Calu3 (cell line): ENCODE measurements at regions of chr14 and their contacts with region 1.

Region 1: DNA sequence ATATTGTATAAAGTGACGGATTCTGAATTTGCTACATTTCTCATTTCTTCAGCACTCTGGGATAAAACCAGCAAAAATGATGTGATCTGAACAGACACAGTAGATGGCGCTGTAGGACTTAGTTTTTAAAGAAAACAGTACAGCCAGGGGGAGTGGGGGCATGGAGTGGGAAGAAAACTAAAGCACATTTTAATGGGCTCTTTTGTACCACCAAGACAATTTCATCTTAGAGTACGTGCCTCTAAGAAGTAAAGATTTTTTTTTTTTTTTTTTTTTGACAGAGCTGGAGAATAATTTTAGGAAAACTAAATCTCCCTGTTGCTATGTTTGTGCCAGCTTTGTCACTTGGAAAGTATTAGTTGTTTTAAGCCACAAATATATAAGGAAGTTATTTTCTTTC is 124.4 kb downstream of the RAD51B start:
- DNase-seq: peak; percentile 75
- H3K4me3 Mint-ChIP-seq: no peak overlapping the region
- H3K27ac Mint-ChIP-seq: peak overlapping the region; percentile 87
- H3K4me1 Mint-ChIP-seq: peaks cover 41% of the 10 kb centered on the region
- H3K27me3 Mint-ChIP-seq: no peaks in the 10 kb centered on the region
- CTCF ChIP-seq: peak; percentile 60

Region 2: GRCh38 chr14:68084256-68084655 is 140.3 kb after region 1 on chr14:
- CTCF ChIA-PET with region 1: no interaction called
- intact Hi-C with region 1: loop called (anchors 5 kb)
- DNase-seq: peak; percentile 22
- H3K4me3 Mint-ChIP-seq: no peak overlapping the region
- H3K27ac Mint-ChIP-seq: no peak overlapping the region
- H3K4me1 Mint-ChIP-seq: peaks cover 34% of the 10 kb centered on the region
- H3K27me3 Mint-ChIP-seq: no peaks in the 10 kb centered on the region
- CTCF ChIP-seq: peak; percentile 15

Region 3: GRCh38 chr14:68191567-68192321 is 247.8 kb after region 1 on chr14:
- CTCF ChIA-PET with region 1: interaction called, 7 read pairs
- intact Hi-C with region 1: loop called (anchors 1 kb)
- DNase-seq: peak; percentile 55
- H3K4me3 Mint-ChIP-seq: no peak overlapping the region
- H3K27ac Mint-ChIP-seq: peak overlapping the region; percentile 87
- H3K4me1 Mint-ChIP-seq: peaks cover 51% of the 10 kb centered on the region
- H3K27me3 Mint-ChIP-seq: no peaks in the 10 kb centered on the region
- CTCF ChIP-seq: no peak

Region 4: GRCh38 chr14:68248481-68249255 is 304.7 kb after region 1 on chr14:
- CTCF ChIA-PET with region 1: interaction called, 9 read pairs
- intact Hi-C with region 1: loop called (anchors 1 kb)
- DNase-seq: peak; percentile 10
- H3K4me3 Mint-ChIP-seq: no peak overlapping the region
- H3K27ac Mint-ChIP-seq: peak overlapping the region; percentile 77
- H3K4me1 Mint-ChIP-seq: peaks cover 70% of the 10 kb centered on the region
- H3K27me3 Mint-ChIP-seq: no peaks in the 10 kb centered on the region
- CTCF ChIP-seq: peak; percentile 42

Region 5: DNA sequence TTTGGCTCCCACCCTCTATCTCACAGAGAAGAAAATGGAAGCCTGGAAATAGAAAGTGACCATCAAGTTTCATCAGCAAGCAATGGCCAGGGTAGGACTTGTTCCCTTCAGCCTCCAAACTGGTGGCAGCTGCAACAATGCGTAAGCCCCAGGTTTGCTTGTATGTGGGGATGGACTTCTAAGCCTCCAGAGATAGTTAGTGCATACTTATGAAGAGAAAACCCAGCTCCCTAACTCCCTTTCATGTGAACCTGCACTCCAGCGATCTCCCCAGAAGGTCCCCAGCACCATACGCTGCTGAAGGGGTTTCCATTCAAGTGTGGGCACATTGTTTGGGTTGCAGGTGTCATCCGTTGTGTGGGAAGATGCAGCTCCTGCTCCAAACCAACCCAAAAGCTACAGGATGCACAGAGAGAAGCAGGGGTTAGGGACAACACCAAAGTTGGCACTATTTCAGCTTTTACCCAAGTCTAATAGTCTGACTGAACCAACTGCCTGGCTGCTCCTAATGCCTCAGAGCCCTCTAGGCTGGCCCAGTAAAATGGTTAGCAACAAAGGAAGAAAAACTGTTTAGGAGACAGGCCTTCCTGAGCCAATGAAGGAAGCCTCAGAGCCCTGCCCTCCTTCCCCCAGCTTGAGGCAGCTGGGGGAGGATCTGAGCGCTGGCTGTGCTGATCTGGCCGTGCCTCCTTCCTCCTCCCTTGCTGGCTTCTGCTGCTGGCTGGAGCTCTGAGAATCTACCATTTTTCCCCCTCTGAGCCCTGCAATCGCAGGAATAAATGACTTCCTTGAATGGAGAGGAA is 836.6 kb after region 1 on chr14:
- CTCF ChIA-PET with region 1: interaction called, 10 read pairs
- intact Hi-C with region 1: loop called (anchors 5 kb)
- DNase-seq: no peak
- H3K4me3 Mint-ChIP-seq: no peak overlapping the region
- H3K27ac Mint-ChIP-seq: no peak overlapping the region
- H3K4me1 Mint-ChIP-seq: peaks cover 47% of the 10 kb centered on the region
- H3K27me3 Mint-ChIP-seq: no peaks in the 10 kb centered on the region
- CTCF ChIP-seq: no peak

Region 6: GRCh38 chr14:68824517-68825347 is 880.8 kb after region 1 on chr14:
- CTCF ChIA-PET with region 1: interaction called, 10 read pairs
- intact Hi-C with region 1: no loop called
- DNase-seq: peak; percentile 90
- H3K4me3 Mint-ChIP-seq: no peak overlapping the region
- H3K27ac Mint-ChIP-seq: peak overlapping the region; percentile 50
- H3K4me1 Mint-ChIP-seq: peaks cover 14% of the 10 kb centered on the region
- H3K27me3 Mint-ChIP-seq: no peaks in the 10 kb centered on the region
- CTCF ChIP-seq: peak; percentile 41